ENCODE measurements at regions of chr5 and their contacts with region 1.

Region 1: DNA sequence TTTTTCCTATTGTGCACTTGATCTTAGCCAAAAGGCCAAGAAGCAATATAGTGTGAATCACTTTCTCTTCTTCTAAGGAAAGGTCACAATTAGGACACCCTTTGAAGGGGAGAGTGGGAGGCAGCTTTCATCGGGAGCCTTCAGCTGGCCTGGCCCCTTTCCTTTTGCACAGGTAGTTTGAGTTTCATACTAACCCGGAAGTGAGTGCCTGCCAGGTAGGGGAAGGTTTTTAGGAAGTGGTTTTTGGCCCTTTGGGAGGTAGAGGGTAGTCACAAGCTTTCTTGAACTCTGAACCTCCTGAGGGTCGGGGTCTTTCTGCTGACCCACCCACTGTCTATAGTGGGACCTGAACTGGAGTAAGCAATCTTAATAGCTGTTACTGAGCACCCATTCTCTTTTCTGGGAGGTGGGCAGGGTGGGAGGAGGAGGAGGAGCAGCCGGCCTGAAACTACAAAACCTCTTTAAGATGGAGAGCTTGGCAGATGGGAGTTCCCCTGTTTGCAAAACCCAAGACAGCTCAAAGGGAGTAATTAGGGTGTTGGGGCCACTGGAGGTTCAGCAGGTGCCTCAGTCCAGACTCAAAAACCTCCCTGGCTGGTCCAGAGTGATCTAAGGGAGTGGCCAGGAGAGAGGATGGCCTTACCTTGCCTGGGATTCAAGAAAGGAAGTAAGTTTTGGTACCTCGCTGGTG is 6.0 kb downstream of the LARP1 start:
- DNase-seq: no peak
- ATAC-seq: no peak
- H3K4me3 ChIP-seq: no peak overlapping the region
- H3K27ac ChIP-seq: no peak overlapping the region
- H3K4me1 ChIP-seq: peaks cover 58% of the 10 kb centered on the region
- H3K27me3 ChIP-seq: no peaks in the 10 kb centered on the region
- CTCF ChIP-seq: no peak

Region 2: GRCh38 chr5:154776167-154776566 is 15.0 kb after region 1 on chr5:
- intact Hi-C with region 1: loop called in 1 of 2 experiments (anchors 2 kb)
- DNase-seq: no peak
- ATAC-seq: no peak
- H3K4me3 ChIP-seq: no peak overlapping the region
- H3K27ac ChIP-seq: peak overlapping the region; percentile 11
- H3K4me1 ChIP-seq: peaks cover 98% of the 10 kb centered on the region
- H3K27me3 ChIP-seq: no peaks in the 10 kb centered on the region
- CTCF ChIP-seq: no peak

Region 3: GRCh38 chr5:155418960-155419579 is 657.9 kb after region 1 on chr5:
- intact Hi-C with region 1: no loop called
- DNase-seq: no peak
- ATAC-seq: no peak
- H3K4me3 ChIP-seq: no peak overlapping the region
- H3K27ac ChIP-seq: no peak overlapping the region
- H3K4me1 ChIP-seq: no peaks in the 10 kb centered on the region
- H3K27me3 ChIP-seq: no peaks in the 10 kb centered on the region
- CTCF ChIP-seq: no peak

Measured in psoas muscle (tissue), 8 donors.